Ovary (tissue), 10 donors: ENCODE measurements at regions of chr1 and their contacts with region 1.

Region 1: GRCh38 chr1:217373761-217374701 is 256.9 kb downstream of the GPATCH2 start:
- DNase-seq: no peak
- H3K4me3 ChIP-seq: no peak overlapping the region
- H3K27ac ChIP-seq: no peak overlapping the region
- H3K4me1 ChIP-seq: no peaks in the 10 kb centered on the region
- H3K27me3 ChIP-seq: no peaks in the 10 kb centered on the region
- CTCF ChIP-seq: no peak
- EP300 ChIP-seq: no peak
- POLR2A ChIP-seq: no peak

Region 2: GRCh38 chr1:217343914-217344313 is 30.1 kb before region 1 on chr1:
- intact Hi-C with region 1: loop called in 1 of 4 experiments (anchors 2 kb)
- DNase-seq: no peak
- H3K4me3 ChIP-seq: no peak overlapping the region
- H3K27ac ChIP-seq: no peak overlapping the region
- H3K4me1 ChIP-seq: no peaks in the 10 kb centered on the region
- H3K27me3 ChIP-seq: no peaks in the 10 kb centered on the region
- CTCF ChIP-seq: no peak
- EP300 ChIP-seq: no peak
- POLR2A ChIP-seq: no peak

Region 3: GRCh38 chr1:217493291-217493690 is 119.3 kb after region 1 on chr1:
- intact Hi-C with region 1: no loop called
- DNase-seq: no peak
- H3K4me3 ChIP-seq: no peak overlapping the region
- H3K27ac ChIP-seq: no peak overlapping the region
- H3K4me1 ChIP-seq: no peaks in the 10 kb centered on the region
- H3K27me3 ChIP-seq: no peaks in the 10 kb centered on the region
- CTCF ChIP-seq: no peak
- EP300 ChIP-seq: no peak
- POLR2A ChIP-seq: no peak

Region 4: GRCh38 chr1:217590598-217590997 is 216.6 kb after region 1 on chr1:
- intact Hi-C with region 1: no loop called
- DNase-seq: no peak
- H3K4me3 ChIP-seq: no peak overlapping the region
- H3K27ac ChIP-seq: no peak overlapping the region
- H3K4me1 ChIP-seq: no peaks in the 10 kb centered on the region
- H3K27me3 ChIP-seq: no peaks in the 10 kb centered on the region
- CTCF ChIP-seq: no peak
- EP300 ChIP-seq: no peak
- POLR2A ChIP-seq: no peak